MCF 10A (cell line): ENCODE measurements at regions of chr19 and their contacts with region 1.

Region 1: GRCh38 chr19:14059093-14059480 is 2.8 kb downstream of the PALM3 start:
- DNase-seq: no peak
- H3K4me3 Mint-ChIP-seq: no peak overlapping the region
- H3K27ac Mint-ChIP-seq: no peak overlapping the region
- H3K4me1 Mint-ChIP-seq: peaks cover 13% of the 10 kb centered on the region
- H3K27me3 Mint-ChIP-seq: peaks cover 23% of the 10 kb centered on the region
- CTCF ChIP-seq: peak; percentile 61

Region 2: DNA sequence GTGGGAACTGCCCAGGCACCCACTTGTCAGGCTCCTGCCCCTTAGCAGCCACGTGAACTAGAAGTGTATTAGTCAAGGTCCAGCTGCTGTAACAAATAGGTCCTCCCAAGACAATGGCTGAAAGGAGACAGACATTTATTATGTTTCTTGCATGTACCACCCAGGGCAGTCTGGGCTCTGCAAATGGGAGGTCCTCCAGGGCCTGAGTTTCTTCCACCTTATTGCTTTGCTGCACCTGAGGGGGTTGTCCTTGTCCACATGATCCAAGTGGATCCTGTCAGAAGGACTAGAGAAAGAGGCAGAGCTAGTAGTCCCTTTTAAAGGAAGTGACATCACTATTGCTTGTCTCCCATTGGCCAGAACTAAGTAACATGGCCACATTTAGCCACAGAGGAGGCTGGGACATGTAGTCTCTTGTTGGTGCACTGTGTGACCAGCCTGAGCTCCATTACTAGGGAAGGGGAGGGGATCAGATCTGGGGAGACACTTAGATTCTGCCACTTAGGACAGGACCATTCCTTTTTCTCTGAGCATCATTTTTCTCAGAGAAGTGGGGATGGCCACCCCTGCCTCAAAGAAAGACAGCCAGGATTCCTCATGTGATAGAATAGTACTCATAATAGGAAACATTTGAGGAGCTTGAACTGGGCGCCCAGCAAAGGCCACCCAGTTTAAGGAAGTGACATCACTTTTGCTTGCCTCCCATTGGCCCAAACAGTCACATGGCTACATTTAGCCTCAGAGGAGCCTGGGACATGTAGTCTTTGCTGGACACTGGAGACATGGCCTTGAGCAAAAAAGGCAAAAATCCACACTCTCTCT is 137.9 kb before region 1 on chr19:
- CTCF ChIA-PET with region 1: no interaction called
- POLR2A ChIA-PET with region 1: no interaction called
- intact Hi-C with region 1: no loop called
- DNase-seq: peak; percentile 48
- H3K4me3 Mint-ChIP-seq: no peak overlapping the region
- H3K27ac Mint-ChIP-seq: no peak overlapping the region
- H3K4me1 Mint-ChIP-seq: no peaks in the 10 kb centered on the region
- H3K27me3 Mint-ChIP-seq: no peaks in the 10 kb centered on the region
- CTCF ChIP-seq: no peak

Region 3: GRCh38 chr19:14048443-14049153 is 10.5 kb before region 1 on chr19:
- CTCF ChIA-PET with region 1: interaction called, 12 read pairs
- POLR2A ChIA-PET with region 1: no interaction called
- intact Hi-C with region 1: no loop called
- DNase-seq: peak; percentile 39
- H3K4me3 Mint-ChIP-seq: no peak overlapping the region
- H3K27ac Mint-ChIP-seq: no peak overlapping the region
- H3K4me1 Mint-ChIP-seq: no peaks in the 10 kb centered on the region
- H3K27me3 Mint-ChIP-seq: no peaks in the 10 kb centered on the region
- CTCF ChIP-seq: peak; percentile 78

Region 4: GRCh38 chr19:14073261-14073924 is 14.3 kb after region 1 on chr19:
- CTCF ChIA-PET with region 1: interaction called, 24 read pairs
- POLR2A ChIA-PET with region 1: interaction called, 4 read pairs
- intact Hi-C with region 1: no loop called
- DNase-seq: peak; percentile 71
- H3K4me3 Mint-ChIP-seq: peak overlapping the region; percentile 86
- H3K27ac Mint-ChIP-seq: no peak overlapping the region
- H3K4me1 Mint-ChIP-seq: no peaks in the 10 kb centered on the region
- H3K27me3 Mint-ChIP-seq: no peaks in the 10 kb centered on the region
- CTCF ChIP-seq: peak; percentile 37

Region 5: GRCh38 chr19:14661372-14661924 is 602.4 kb after region 1 on chr19:
- CTCF ChIA-PET with region 1: no interaction called
- POLR2A ChIA-PET with region 1: no interaction called
- intact Hi-C with region 1: no loop called
- DNase-seq: no peak
- H3K4me3 Mint-ChIP-seq: no peak overlapping the region
- H3K27ac Mint-ChIP-seq: no peak overlapping the region
- H3K4me1 Mint-ChIP-seq: no peaks in the 10 kb centered on the region
- H3K27me3 Mint-ChIP-seq: no peaks in the 10 kb centered on the region
- CTCF ChIP-seq: no peak